ENCODE measurements at regions of chr10 and their contacts with region 1.

Region 1: DNA sequence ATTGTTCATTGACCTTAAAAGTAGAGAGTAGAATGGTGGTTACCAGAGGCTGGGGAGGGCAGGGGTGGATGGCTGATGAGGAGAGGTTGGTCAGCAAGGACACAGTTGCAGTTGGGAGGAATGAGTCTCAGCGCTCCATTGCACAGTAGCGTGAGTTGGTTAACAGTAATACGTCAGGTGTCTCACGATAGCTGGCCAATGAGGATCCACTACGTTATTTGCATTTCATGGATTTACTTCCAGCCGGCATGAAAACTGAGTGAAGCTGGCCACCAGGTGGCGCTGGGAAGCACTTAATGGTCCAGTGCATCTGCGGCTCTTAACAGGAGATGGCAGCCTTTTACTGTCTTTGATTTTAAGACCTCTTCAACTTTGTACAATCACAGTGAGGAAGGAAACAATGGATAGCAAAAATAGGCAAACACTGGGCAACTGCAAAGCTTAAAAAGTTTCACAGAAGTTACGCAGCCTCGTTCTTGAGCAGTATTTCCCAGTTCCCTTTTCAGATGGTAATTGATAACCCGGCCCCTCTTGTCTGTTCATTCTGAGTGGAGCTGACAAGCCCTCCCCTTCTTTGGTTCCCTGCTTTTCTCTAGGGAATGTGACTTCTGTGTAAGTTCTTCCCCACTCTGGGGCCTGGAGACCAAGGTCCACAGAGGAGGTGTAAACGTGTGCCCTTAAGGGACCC is 23.7 kb downstream of the AKR1E2 start:
- DNase-seq: peak; percentile 90
- H3K4me3 Mint-ChIP-seq: peak overlapping the region; percentile 5
- H3K27ac Mint-ChIP-seq: no peak overlapping the region
- H3K4me1 Mint-ChIP-seq: peaks cover 11% of the 10 kb centered on the region
- H3K27me3 Mint-ChIP-seq: no peaks in the 10 kb centered on the region

Region 2: GRCh38 chr10:4804465-4804864 is 45.2 kb before region 1 on chr10:
- CTCF ChIA-PET with region 1: no interaction called
- POLR2A ChIA-PET with region 1: no interaction called
- DNase-seq: no peak
- H3K4me3 Mint-ChIP-seq: no peak overlapping the region
- H3K27ac Mint-ChIP-seq: no peak overlapping the region
- H3K4me1 Mint-ChIP-seq: peaks cover 2% of the 10 kb centered on the region
- H3K27me3 Mint-ChIP-seq: peaks cover 11% of the 10 kb centered on the region

Region 3: DNA sequence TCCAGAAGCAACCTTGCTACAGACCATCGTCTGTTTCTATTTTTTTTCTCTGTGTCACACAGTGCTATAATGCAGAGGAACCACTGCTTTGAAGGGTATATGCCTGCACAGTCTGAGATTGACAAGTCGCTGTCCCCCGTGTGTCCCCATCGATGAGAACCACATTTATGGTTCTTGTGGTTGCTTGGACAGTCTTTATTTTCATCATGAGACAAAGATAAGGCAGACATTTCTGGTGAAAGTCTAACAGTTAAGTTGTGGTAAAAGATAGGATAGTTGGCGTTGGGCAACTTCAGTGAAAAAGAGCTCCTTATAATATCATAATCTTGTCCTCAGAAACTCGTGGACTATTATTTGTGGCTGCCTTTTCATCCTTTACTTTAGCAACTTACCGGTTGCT is 30.0 kb before region 1 on chr10:
- CTCF ChIA-PET with region 1: interaction called, 53 read pairs
- POLR2A ChIA-PET with region 1: interaction called, 3 read pairs
- DNase-seq: no peak
- H3K4me3 Mint-ChIP-seq: no peak overlapping the region
- H3K27ac Mint-ChIP-seq: no peak overlapping the region
- H3K4me1 Mint-ChIP-seq: peaks cover 3% of the 10 kb centered on the region
- H3K27me3 Mint-ChIP-seq: peaks cover 43% of the 10 kb centered on the region

Region 4: DNA sequence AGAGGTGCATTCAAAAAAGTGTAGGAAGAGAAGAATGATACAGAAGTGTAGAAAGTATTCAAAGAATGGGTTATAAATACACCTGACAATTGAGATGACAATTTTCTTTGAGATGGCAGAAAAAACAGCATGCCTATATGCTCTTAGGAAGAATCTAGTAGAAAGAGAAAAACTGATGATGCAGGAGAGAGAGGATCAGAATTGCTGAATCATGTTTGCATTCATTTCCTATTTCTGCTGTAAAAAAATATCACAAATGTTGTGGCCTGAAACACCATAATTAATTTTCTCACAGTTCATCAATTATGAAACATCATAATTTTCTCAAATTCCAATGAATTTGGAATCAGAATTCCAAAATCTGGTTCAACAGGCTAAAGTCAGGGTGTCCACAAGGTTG is 103.7 kb after region 1 on chr10:
- CTCF ChIA-PET with region 1: no interaction called
- POLR2A ChIA-PET with region 1: no interaction called
- DNase-seq: no peak
- H3K4me3 Mint-ChIP-seq: no peak overlapping the region
- H3K27ac Mint-ChIP-seq: no peak overlapping the region
- H3K4me1 Mint-ChIP-seq: no peaks in the 10 kb centered on the region
- H3K27me3 Mint-ChIP-seq: peaks cover 1% of the 10 kb centered on the region

Region 5: DNA sequence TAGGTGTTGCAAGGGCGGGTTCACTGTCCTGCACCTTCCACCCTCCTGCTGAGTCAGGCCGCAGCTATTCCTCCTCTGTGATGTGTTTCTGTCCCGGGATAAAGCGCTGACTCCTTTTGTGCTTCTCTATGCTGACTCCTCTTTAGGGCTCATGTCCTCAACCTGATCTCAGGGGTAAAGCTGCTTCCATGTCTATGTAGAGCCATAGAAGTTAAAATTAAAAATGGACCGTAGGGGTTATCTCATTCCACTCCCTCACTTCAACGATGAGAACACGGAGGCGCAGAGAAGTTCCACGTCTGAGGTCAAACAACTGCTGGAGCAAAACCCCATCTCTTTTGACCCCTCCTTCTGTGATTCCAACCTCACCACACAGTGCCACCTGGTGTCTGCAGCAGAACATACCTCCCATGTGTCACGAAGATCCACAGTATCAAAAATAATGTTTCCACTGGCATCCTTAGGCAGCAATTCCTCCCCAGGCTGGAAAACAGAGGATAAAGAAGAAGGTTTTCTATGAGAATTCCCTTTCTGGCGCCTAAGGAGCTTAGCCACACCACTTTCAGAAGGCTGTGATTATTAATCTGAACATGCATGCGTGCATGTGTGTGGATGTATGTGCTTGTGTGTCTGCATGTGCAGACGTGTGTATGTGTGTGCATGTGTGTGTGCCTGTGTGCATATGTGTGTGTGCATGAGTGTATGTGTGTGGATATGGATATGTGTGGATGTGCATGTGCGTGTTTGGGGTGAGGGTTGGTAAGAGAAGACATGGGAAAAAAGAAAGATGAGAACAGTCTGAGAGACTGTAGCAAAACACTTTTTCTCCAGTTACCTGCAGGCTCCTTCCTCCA is 433.8 kb after region 1 on chr10:
- CTCF ChIA-PET with region 1: interaction called, 36 read pairs
- POLR2A ChIA-PET with region 1: interaction called, 3 read pairs
- DNase-seq: peak; percentile 73
- H3K4me3 Mint-ChIP-seq: no peak overlapping the region
- H3K27ac Mint-ChIP-seq: peak overlapping the region; percentile 87
- H3K4me1 Mint-ChIP-seq: peaks cover 42% of the 10 kb centered on the region
- H3K27me3 Mint-ChIP-seq: no peaks in the 10 kb centered on the region

Region 6: DNA sequence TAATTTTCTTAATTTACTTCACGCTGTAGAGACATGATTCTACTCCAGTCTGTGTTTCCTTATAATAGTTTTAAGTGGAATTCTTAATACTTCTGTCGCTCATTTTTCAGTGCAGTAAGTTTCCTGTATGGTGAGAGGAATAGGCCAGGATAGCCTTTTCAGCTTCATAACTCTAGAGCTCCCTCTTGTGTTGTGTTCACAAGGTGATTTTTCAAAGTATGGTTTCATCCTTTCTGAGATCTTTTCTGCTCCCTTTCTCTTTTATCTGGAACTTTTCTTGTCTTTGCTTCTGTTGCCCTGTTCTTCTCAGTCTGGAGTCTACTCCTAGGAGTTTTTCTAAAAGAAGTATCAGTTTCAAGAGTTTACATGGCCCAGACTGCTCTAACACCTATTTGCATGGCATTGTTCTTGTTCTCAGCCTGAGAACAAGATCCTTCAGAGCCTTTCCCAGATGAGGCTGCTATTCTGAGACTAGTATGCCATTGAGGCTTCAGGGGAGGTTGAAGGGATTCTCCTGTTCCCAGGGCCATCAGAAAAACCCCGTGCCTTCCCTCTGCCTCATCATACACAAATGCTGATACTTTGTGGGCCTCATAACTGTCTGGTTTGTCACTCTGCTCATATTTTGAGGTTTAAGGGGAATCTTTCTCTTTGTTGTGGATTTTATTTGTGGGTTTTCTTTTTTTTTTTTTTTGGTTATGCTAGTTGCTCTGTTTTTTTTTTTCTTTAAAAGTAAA is 584.5 kb after region 1 on chr10:
- CTCF ChIA-PET with region 1: interaction called, 50 read pairs
- POLR2A ChIA-PET with region 1: interaction called, 3 read pairs
- DNase-seq: no peak
- H3K4me3 Mint-ChIP-seq: no peak overlapping the region
- H3K27ac Mint-ChIP-seq: no peak overlapping the region
- H3K4me1 Mint-ChIP-seq: peaks cover 14% of the 10 kb centered on the region
- H3K27me3 Mint-ChIP-seq: no peaks in the 10 kb centered on the region

Region 7: GRCh38 chr10:5623081-5623748 is 773.5 kb after region 1 on chr10:
- CTCF ChIA-PET with region 1: interaction called, 14 read pairs
- POLR2A ChIA-PET with region 1: interaction called, 3 read pairs
- DNase-seq: peak; percentile 85
- H3K4me3 Mint-ChIP-seq: no peak overlapping the region
- H3K27ac Mint-ChIP-seq: no peak overlapping the region
- H3K4me1 Mint-ChIP-seq: peaks cover 14% of the 10 kb centered on the region
- H3K27me3 Mint-ChIP-seq: peaks cover 5% of the 10 kb centered on the region